HCT116 (cell line): ENCODE measurements at regions of chr3 and their contacts with region 1.

Region 1: DNA sequence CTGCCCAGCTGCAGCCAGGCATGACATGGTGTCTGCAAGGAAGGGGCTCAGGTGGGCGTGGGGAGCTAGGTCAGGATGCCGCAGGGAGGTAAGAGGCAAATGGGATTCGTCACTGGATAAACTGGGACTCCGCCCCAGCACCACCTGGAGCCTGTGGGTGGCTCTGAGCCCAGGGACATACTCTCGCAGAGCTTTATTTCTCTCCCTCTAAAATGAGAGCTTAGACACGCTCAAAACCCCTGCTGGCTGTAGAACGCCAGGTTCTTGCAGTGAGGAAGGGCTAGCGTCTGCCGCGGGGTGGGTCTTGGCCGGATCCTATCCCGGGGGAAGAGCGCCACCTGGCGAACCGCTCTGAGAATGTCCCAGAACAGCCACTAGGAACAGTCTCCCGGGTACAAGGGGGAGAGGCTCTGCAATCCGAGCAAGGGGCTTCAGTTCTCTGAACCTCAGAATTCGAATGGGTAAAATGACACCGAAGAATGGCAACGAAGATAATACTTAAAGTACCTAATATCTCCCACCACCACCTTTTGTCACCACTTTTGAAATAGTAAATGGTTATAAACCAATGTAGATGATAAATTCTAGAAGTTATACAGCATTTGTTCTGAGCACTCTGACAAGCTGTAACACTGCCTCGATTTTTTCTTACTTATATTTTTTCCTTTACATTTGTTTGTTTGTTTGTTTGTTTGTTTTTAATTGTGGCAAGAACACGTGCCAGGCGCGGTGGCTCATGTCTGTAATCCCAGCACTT is 53.2 kb upstream of the SRGAP3 start:
- DNase-seq: peak; percentile 56
- ATAC-seq: peak; percentile 98
- H3K4me3 ChIP-seq: peak overlapping the region in 1 of 2 experiments; percentile 37; a peak in 3 of 4 replicates
- H3K27ac ChIP-seq: no peak overlapping the region
- H3K4me1 ChIP-seq: peaks cover 0 to 12% of the 10 kb centered on the region in 2 experiments; a peak in 2 of 4 replicates
- H3K27me3 ChIP-seq: no peaks in the 10 kb centered on the region
- CTCF ChIP-seq: peak; percentile 81 to 97 (median 94)
- POLR2A ChIP-seq: no peak
- RAD21 ChIP-seq: peak; percentile 96

Region 2: GRCh38 chr3:8152821-8153418 is 1149.7 kb before region 1 on chr3:
- CTCF ChIA-PET with region 1: no interaction called
- POLR2A ChIA-PET with region 1: no interaction called
- RAD21 ChIA-PET with region 1: no interaction called
- intact Hi-C with region 1: no loop called
- DNase-seq: no peak
- ATAC-seq: no peak
- H3K4me3 ChIP-seq: no peak overlapping the region
- H3K27ac ChIP-seq: no peak overlapping the region
- H3K4me1 ChIP-seq: no peaks in the 10 kb centered on the region
- H3K27me3 ChIP-seq: no peaks in the 10 kb centered on the region
- CTCF ChIP-seq: no peak
- POLR2A ChIP-seq: no peak
- RAD21 ChIP-seq: no peak

Region 3: GRCh38 chr3:8970971-8971589 is 331.5 kb before region 1 on chr3:
- CTCF ChIA-PET with region 1: interaction called, 23 read pairs
- POLR2A ChIA-PET with region 1: no interaction called
- RAD21 ChIA-PET with region 1: interaction called in 1 of 2 experiments, 3 read pairs
- intact Hi-C with region 1: loop called (anchors 1 kb)
- DNase-seq: peak; percentile 45
- ATAC-seq: peak; percentile 78
- H3K4me3 ChIP-seq: no peak overlapping the region
- H3K27ac ChIP-seq: no peak overlapping the region
- H3K4me1 ChIP-seq: peaks cover 0 to 4% of the 10 kb centered on the region in 2 experiments; a peak in 1 of 4 replicates
- H3K27me3 ChIP-seq: no peaks in the 10 kb centered on the region; the same call in 1 of the 2 replicates
- CTCF ChIP-seq: peak; percentile 89 to 98 (median 95)
- POLR2A ChIP-seq: no peak
- RAD21 ChIP-seq: peak; percentile 98

Region 4: DNA sequence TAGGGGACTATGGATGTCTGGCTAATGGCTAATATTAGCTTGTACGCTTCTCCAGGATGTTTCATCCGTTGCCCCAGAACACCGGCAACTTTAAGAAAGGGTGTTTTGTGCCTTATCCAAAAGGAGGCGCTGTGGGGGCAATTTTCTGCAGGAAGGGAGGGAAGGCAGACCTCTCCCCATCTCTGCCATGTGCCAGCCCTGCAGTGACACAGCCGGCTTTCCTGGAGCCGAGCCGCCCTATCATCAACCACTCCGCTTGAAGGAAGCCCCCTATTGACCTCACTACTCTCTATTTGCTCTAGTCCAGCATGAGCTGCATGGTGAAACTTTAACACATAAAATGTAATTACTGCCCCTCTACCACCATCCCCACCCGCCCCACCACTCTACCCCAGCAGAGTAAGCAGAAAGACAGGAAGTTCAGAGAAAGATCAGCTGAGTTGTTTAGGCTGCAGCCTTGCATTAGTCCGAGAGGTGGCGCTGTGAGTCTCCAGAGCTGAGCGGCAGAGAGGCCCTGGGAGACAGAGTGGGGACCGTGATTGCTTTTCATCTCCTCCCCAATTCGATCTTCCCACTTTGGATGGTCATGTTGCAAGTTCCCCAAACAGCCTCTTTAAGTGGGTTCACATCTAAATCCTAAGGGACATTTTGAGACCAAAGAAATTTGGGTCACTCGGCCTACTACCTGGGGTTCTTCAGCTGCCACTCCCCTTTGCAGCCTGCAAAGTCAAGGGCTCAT is 314.8 kb before region 1 on chr3:
- CTCF ChIA-PET with region 1: interaction called, 26 read pairs
- POLR2A ChIA-PET with region 1: interaction called, 6 read pairs
- RAD21 ChIA-PET with region 1: interaction called, 3 to 10 read pairs
- intact Hi-C with region 1: loop called (anchors 1 kb)
- DNase-seq: peak; percentile 32
- ATAC-seq: peak; percentile 95
- H3K4me3 ChIP-seq: no peak overlapping the region
- H3K27ac ChIP-seq: no peak overlapping the region
- H3K4me1 ChIP-seq: no peaks in the 10 kb centered on the region
- H3K27me3 ChIP-seq: no peaks in the 10 kb centered on the region
- CTCF ChIP-seq: peak; percentile 74 to 87 (median 84); a peak in 5 of 6 replicates
- POLR2A ChIP-seq: no peak
- RAD21 ChIP-seq: peak; percentile 78

Region 5: DNA sequence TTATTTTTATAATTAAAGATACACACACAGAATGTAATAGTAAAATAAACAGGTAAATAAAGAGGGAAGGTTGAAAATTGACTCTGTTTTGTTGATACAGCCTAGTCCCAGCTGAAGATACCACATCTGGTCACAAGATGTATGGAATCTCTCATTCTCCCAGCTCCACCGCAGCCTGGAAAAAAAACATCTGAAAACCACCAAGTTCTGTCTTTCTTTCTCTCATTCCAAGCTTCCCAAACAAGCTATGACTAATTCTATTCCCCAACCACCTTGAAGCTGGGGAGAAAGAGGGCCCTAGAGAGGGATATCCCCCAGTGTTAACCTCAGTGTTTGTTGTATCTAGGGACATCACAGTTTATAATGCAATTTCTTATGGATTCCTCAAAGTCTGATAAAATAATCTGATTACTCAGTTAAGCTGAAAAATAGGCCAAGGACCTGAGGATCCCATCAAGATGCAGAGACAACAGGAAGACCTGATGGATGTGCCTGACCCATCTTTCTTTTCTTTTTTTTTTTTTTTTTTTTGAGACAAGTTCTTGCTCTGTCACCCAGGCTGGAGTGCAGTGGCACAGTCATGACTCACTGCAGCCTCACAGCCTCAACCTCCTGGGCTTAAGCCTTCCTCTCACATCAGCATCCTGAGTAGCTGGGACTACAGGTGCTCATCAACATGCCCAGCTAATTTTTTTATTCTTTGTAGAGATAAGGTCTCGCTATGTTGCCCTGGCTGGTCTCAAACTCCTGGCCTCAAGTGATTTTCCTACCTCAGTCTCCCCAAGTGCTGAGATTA is 91.2 kb before region 1 on chr3:
- CTCF ChIA-PET with region 1: no interaction called
- POLR2A ChIA-PET with region 1: no interaction called
- RAD21 ChIA-PET with region 1: no interaction called
- intact Hi-C with region 1: no loop called
- DNase-seq: no peak
- ATAC-seq: no peak
- H3K4me3 ChIP-seq: no peak overlapping the region
- H3K27ac ChIP-seq: no peak overlapping the region
- H3K4me1 ChIP-seq: peaks cover 0 to 7% of the 10 kb centered on the region in 2 experiments; a peak in 1 of 4 replicates
- H3K27me3 ChIP-seq: no peaks in the 10 kb centered on the region
- CTCF ChIP-seq: no peak
- POLR2A ChIP-seq: no peak
- RAD21 ChIP-seq: no peak